Aorta (tissue), 5 donors: ENCODE measurements at regions of chr18 and their contacts with region 1.

Region 1: GRCh38 chr18:32968248-32968647 is 195.4 kb upstream of the KLHL14 start:
- DNase-seq: no peak
- ATAC-seq: no peak
- H3K4me3 ChIP-seq: no peak overlapping the region
- H3K27ac ChIP-seq: no peak overlapping the region
- H3K4me1 ChIP-seq: no peaks in the 10 kb centered on the region
- H3K27me3 ChIP-seq: no peaks in the 10 kb centered on the region

Region 2: GRCh38 chr18:33022370-33022769 is 54.1 kb after region 1 on chr18:
- intact Hi-C with region 1: loop called in 1 of 2 experiments (anchors 2 kb)
- DNase-seq: no peak
- ATAC-seq: no peak
- H3K4me3 ChIP-seq: no peak overlapping the region
- H3K27ac ChIP-seq: no peak overlapping the region
- H3K4me1 ChIP-seq: no peaks in the 10 kb centered on the region
- H3K27me3 ChIP-seq: no peaks in the 10 kb centered on the region

Region 3: GRCh38 chr18:33210575-33211189 is 242.4 kb after region 1 on chr18:
- intact Hi-C with region 1: no loop called
- DNase-seq: no peak
- ATAC-seq: no peak
- H3K4me3 ChIP-seq: no peak overlapping the region
- H3K27ac ChIP-seq: no peak overlapping the region
- H3K4me1 ChIP-seq: no peaks in the 10 kb centered on the region
- H3K27me3 ChIP-seq: no peaks in the 10 kb centered on the region